HepG2 (cell line): ENCODE measurements at regions of chr7 and their contacts with region 1.

Region 1: DNA sequence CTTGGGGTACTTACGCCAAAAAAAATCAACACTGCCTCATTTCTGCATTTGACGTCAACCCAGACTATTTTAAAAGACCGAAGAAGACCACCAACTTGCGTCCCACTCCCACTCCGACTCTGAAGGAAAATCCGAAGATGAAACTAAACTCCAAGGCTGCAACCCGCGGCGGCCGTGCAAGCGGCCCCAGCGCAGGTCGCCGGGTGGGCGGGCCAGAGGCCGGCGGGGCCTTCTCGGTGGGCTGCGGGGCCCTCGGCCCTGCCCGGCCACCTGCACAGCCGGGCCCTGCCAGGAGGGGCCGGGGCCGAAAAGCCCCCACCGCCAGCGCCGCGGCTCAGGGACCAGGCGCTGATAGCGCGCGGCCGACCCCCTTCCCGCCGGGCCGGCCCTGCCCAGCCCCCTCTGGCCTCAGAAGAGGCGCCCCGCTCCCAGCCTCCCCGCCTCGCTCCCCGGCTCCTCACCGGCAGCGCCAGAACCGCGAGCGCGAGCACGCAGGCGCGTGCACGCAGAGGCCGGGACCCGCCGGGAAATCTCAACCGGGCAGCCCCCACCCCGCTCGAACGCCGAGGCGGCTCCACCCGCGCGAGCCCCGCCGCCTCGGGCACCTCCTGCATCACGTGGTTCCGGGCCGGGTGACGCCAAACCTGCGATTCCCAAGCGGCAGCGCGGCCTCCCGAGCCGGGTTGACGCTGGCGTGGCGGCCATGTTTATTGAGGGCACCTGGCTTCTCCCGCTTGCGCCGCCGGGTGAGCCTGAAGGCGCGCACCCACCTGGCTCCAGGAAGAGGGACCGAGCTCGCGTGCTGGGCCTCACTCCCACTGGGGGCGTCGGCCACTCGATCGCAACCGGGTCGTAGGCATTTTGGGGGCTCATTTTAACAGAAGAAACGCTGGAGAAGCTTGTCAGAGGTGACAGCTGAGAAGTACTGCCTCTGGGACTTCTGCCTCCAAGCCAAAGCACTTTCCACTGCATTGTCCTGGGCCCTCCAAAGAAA is at the start of gene C7orf25:
- DNase-seq: peak; percentile 90
- ATAC-seq: peak; percentile 92
- H3K4me3 ChIP-seq: peak within 1 kb of the TSS; percentile 59 to 93 (median 79)
- H3K27ac ChIP-seq: peak within 1 kb of the TSS; percentile 65
- H3K4me1 ChIP-seq: peaks cover 49% of the 10 kb centered on the region
- H3K27me3 ChIP-seq: no peaks in the 10 kb centered on the region; a peak in 1 of 5 replicates
- CTCF ChIP-seq: peak; percentile 52
- EP300 ChIP-seq: no peak
- POLR2A ChIP-seq: peak; percentile 51; a peak in 2 of 4 replicates
- RAD21 ChIP-seq: peak; percentile 21
- total RNA-seq, gene C7orf25: 1.1 and 1.3 TPM in 2 replicates

Region 2: GRCh38 chr7:42886129-42886528 is 25.6 kb before region 1 on chr7:
- CTCF ChIA-PET with region 1: no interaction called
- POLR2A ChIA-PET with region 1: interaction called, 9 read pairs
- in situ Hi-C with region 1: no loop called
- intact Hi-C with region 1: loop called (anchors 2 kb)
- DNase-seq: no peak
- ATAC-seq: no peak
- H3K4me3 ChIP-seq: no peak overlapping the region
- H3K27ac ChIP-seq: no peak overlapping the region
- H3K4me1 ChIP-seq: peaks cover 11% of the 10 kb centered on the region
- H3K27me3 ChIP-seq: no peaks in the 10 kb centered on the region
- CTCF ChIP-seq: peak; percentile 11; the same call in 1 of the 2 replicates
- EP300 ChIP-seq: no peak
- POLR2A ChIP-seq: no peak
- RAD21 ChIP-seq: no peak

Region 3: GRCh38 chr7:42931834-42932651 is 20.3 kb after region 1 on chr7 and contains the starts of genes MRPL32 and PSMA2:
- CTCF ChIA-PET with region 1: no interaction called
- POLR2A ChIA-PET with region 1: interaction called, 13 read pairs
- in situ Hi-C with region 1: no loop called
- intact Hi-C with region 1: loop called (anchors 1 kb)
- DNase-seq: peak; percentile 97
- ATAC-seq: peak; percentile 100
- H3K4me3 ChIP-seq: peak within 1 kb of the TSS; percentile 85 to 97 (median 94)
- H3K27ac ChIP-seq: peak within 1 kb of the TSS; percentile 76
- H3K4me1 ChIP-seq: peaks cover 55% of the 10 kb centered on the region
- H3K27me3 ChIP-seq: no peaks in the 10 kb centered on the region; a peak in 1 of 5 replicates
- CTCF ChIP-seq: no peak
- EP300 ChIP-seq: no peak
- POLR2A ChIP-seq: peak; percentile 79 to 91
- RAD21 ChIP-seq: no peak; the same call in 1 of the 2 replicates
- total RNA-seq, gene MRPL32: 56.0 and 81.2 TPM in 2 replicates
- total RNA-seq, gene PSMA2: 266 and 383 TPM in 2 replicates